ENCODE measurements at regions of chr12 and their contacts with region 1.

Region 1: DNA sequence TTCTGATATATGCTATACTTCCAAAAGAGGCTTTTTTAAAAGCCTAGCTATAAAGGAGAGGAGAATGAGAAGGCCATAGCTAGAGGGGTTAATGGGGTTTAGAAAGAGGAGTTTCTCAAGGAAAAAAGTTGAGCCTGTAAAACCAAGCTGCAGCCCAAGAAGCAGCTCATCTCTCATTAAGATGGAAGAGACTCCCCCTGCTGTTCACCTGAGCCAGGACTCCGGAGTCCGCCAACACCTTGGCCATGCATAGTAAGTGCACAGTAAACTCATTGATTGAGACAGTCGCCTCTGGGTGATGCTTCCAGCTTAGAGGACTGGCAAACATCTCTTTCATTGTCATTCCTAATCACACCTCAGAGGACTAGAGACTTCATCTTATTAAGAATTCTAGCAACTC is 46.2 kb downstream of the ANO2 start:
- DNase-seq: no peak
- H3K4me3 ChIP-seq: no peak overlapping the region
- H3K27ac ChIP-seq: no peak overlapping the region
- H3K4me1 ChIP-seq: no peaks in the 10 kb centered on the region
- H3K27me3 ChIP-seq: no peaks in the 10 kb centered on the region
- CTCF ChIP-seq: no peak
- POLR2A ChIP-seq: no peak

Region 2: DNA sequence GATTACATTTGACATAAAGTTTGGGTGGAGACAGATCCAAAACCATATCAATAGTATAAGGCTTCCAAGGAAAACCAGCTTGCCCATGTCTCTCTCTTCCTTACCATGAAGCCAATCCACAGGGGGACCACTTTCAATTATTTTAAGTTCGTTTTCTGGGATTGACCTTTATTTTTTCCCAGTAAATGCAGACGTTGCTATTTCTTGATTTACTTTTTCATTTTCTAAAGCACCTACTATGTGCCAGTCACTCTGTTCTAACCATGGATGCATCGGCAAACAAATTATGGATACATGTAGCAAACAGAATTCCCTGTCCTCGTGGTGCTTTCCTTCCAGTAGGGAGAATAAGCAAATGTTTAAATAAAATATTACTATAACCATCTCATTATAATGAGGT is 1055.0 kb before region 1 on chr12:
- intact Hi-C with region 1: loop called (anchors 5 kb)
- DNase-seq: no peak
- H3K4me3 ChIP-seq: no peak overlapping the region
- H3K27ac ChIP-seq: no peak overlapping the region
- H3K4me1 ChIP-seq: no peaks in the 10 kb centered on the region
- H3K27me3 ChIP-seq: no peaks in the 10 kb centered on the region
- CTCF ChIP-seq: no peak
- POLR2A ChIP-seq: no peak

Region 3: DNA sequence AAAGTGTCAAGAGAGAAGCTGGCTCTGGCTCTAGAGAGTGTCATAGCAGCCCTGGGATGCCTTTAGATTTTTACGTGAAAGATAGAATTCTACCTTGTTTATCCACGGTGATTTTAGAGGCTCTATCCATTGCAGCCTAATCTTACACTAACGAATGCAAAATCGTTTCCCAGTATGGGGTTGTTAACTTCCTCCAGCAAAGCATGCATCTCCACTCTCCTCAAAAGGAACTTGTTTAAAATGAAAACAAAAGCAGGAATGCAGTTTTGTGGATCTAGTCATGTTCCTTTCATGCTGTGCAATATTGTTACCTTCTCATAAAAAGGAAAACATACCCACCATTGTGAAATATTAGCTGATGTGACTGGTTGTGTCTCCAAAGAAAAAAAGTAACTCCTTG is 42.2 kb before region 1 on chr12:
- intact Hi-C with region 1: loop called (anchors 2 kb)
- DNase-seq: no peak
- H3K4me3 ChIP-seq: no peak overlapping the region
- H3K27ac ChIP-seq: no peak overlapping the region
- H3K4me1 ChIP-seq: no peaks in the 10 kb centered on the region
- H3K27me3 ChIP-seq: no peaks in the 10 kb centered on the region
- CTCF ChIP-seq: no peak
- POLR2A ChIP-seq: no peak

Region 4: DNA sequence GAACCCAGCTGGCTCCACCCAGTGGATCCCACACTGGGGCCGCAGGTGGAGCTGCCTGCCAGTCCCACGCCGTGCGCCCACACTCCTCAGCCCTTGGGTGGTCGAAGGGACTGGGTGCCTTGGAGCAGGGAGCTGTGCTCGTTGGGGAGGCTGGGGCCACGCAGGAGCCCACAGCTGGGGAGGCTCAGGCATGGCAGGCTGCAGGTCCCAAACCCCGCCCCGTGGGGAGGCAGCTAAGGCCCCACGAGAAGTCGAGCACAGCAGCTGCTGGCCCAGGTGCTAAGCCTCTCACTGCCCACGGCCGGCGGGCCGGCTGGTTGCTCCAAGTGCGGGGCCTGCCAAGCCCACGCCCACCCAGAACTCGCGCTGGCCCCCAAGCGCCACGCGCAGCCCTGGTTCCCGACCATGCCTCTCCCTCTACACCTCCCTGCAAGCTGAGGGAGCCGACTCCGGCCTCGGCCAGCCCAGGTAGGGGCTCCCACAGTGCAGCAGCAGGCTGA is 10.0 kb before region 1 on chr12:
- intact Hi-C with region 1: loop called (anchors 1 kb)
- DNase-seq: no peak
- H3K4me3 ChIP-seq: no peak overlapping the region
- H3K27ac ChIP-seq: no peak overlapping the region
- H3K4me1 ChIP-seq: no peaks in the 10 kb centered on the region
- H3K27me3 ChIP-seq: no peaks in the 10 kb centered on the region
- CTCF ChIP-seq: no peak
- POLR2A ChIP-seq: no peak